Astrocyte of the cerebellum (primary cell): ENCODE measurements at regions of chr18 and their contacts with region 1.

Region 1: DNA sequence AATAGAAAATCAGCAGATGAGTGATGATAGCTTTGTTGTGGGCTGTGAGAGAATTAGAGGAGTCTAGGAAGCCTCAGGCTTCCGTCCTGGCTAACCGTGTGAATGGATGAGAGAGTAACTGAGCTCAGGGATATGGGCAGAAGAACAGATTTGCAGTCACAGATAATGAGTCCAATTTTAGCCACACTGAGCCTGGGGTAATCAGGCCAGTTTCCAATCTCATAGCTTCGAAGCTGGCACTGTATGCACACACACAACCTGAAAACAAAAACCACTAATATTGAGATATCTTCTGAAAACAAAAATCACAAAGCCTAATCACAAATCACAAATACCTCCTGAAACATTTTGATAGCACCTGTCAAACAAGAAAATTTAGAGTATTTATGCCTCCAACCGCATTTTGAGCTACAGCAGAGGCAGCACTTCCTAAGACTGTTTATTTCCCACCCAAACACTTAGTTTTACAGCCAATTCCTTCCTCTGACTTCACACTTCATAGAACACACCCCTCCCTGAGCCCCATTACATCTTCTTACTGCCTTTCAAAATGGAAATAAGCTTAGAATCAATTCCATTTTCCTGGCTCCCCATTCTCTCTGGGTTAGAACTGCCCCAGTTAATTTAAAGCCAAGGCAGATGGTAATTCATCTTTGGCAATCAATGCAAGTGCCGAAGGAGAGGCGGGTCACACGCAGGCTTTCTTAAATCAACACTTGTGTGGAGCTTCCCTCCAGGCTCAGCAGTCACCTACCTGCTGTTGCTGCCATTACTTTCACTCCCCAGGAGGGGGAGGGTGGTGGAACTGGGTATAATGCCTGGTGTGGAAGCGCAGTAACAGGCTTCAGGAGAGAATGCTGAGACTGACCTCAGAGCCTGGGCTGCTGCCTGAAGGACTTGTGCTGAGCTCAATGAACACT is 18.9 kb downstream of the TTR start:
- DNase-seq: no peak
- H3K4me3 ChIP-seq: no peak overlapping the region
- CTCF ChIP-seq: peak; percentile 28

Region 2: DNA sequence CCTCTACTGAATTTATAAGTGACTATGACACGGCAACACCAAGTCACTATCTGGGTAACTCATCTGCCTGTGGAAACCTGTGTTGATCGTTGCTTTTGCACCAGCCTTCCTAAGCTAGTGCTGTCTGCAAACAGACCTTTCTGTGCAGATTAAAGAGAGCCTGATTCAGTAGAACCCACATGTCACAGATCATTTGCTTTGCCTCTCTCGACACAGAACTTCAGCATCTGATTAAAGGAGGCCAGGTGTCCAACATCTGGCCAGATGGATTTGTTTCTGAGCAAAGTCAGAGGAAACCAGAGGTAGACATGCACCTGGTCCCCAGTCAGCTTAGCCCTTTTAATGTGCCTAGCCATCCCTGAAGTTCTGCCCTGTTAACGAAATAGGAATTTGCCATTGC is 33.9 kb before region 1 on chr18:
- in situ Hi-C with region 1: loop called (anchors 5 kb)
- DNase-seq: no peak
- H3K4me3 ChIP-seq: no peak overlapping the region
- CTCF ChIP-seq: no peak

Region 3: GRCh38 chr18:31658670-31659575 is 48.4 kb after region 1 on chr18:
- in situ Hi-C with region 1: no loop called
- DNase-seq: peak; percentile 0
- H3K4me3 ChIP-seq: no peak overlapping the region
- CTCF ChIP-seq: no peak